ENCODE measurements at regions of chr12 and their contacts with region 1.

Region 1: DNA sequence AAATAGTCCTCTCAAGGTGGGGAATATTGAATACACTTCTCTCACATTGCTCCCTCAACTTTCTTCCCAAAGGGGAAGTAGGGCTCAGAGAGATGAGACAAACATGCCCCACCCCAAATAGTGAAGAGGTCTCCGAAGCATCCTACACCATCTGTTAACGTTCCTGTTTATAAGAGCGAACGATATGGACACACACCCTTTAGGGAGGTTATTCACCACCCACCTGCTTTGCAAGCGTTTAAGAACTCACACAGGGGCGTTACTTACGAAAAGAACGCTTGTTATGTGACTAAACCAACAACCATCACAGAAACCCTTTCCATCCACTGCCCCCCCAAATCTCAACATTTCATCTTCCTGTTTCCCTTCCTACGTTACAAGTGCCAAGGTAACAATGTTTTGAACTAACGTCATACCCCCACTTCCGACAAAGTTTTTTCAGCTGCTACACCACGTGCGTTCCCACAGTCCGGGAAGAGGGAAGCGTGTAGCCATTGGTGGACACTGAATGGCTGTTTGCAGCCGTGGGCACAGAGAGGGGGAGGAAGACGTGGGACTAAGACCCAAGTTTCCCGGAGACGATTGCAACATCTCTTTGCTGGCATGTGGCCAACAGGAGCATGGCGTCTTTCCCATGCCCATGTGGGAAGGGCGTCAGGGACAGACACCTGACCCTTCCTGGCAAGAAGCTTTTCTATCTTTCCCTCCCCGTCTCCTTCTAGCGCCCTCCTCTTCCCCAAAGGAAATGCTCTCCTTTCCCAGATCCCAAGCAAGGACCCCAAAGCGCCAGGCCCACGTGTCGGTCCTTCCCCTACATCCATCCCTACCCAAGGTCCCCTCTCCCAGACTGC is 1.2 kb downstream of the YBX3 start:
- DNase-seq: peak; percentile 23 to 87 (median 63)

Region 2: GRCh38 chr12:10613349-10614055 is 108.4 kb before region 1 on chr12 and contains the start of gene MAGOHB:
- intact Hi-C with region 1: loop called (anchors 10 kb)
- DNase-seq: peak; percentile 81 to 98 (median 94)

Region 3: DNA sequence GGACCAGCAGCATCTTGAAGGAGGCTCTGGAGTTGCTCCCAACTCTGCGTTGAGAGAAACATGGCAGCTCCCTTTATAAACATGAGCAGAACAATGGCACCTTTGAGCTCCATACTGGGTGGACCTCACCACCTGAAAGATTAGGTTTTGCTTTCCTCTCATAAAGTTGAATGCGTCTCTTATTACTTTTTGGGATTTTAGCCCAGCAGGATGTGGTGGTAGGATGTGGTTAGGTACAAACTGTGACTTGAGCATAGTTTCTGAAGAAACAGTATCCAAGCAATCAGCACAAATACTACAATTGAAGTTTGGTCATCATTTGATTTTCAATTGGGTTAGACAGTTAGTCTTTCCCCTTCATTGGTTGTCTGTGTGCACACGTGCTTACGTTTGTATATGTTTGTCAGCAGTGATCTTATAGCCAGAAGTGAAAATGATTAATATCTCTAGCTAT is 127.6 kb after region 1 on chr12 and contains the start of gene PRR4:
- intact Hi-C with region 1: no loop called
- DNase-seq: no peak

Region 4: DNA sequence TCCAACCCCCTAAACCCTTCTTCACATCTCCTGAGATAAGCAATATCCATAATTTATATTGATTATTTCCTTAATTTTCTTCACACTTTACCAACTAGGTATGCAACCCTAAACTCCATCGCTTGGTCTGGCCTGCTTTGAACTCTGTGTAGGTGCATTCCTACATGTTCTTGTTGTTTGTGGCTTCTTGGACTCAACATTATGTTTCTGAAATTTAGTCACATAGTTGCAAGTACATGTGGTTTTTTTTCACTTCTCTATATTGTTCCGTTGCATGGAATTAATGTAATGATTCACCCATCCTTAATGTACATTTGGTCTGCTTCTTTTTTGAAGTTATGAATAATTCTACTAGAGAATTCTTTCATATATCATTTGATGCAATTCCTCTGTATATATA is 414.2 kb after region 1 on chr12:
- intact Hi-C with region 1: no loop called
- DNase-seq: no peak